Activated CD4-positive, alpha-beta memory T cell treated with anti-CD3 and anti-CD28 coated beads for 36 hours (primary cell): ENCODE measurements at regions of chr22 and their contacts with region 1.

Region 1: GRCh38 chr22:26589845-26590736 is at the start of gene TPST2:
- DNase-seq: peak; percentile 84
- H3K4me3 Mint-ChIP-seq: peak within 1 kb of the TSS; percentile 86
- H3K27ac Mint-ChIP-seq: peak within 1 kb of the TSS; percentile 88
- H3K4me1 Mint-ChIP-seq: peaks cover 55% of the 10 kb centered on the region
- H3K27me3 Mint-ChIP-seq: no peaks in the 10 kb centered on the region
- total RNA-seq, gene TPST2: 27.9 to 31.2 TPM

Region 2: GRCh38 chr22:26502688-26503561 is 87.2 kb before region 1 on chr22:
- CTCF ChIA-PET with region 1: no interaction called
- POLR2A ChIA-PET with region 1: interaction called, 3 read pairs
- intact Hi-C with region 1: loop called (anchors 5 kb)
- DNase-seq: peak; percentile 75
- H3K4me3 Mint-ChIP-seq: no peak overlapping the region
- H3K27ac Mint-ChIP-seq: peak overlapping the region; percentile 87
- H3K4me1 Mint-ChIP-seq: peaks cover 20% of the 10 kb centered on the region
- H3K27me3 Mint-ChIP-seq: no peaks in the 10 kb centered on the region

Region 3: GRCh38 chr22:26574001-26574725 is 15.9 kb before region 1 on chr22:
- CTCF ChIA-PET with region 1: no interaction called
- POLR2A ChIA-PET with region 1: no interaction called
- intact Hi-C with region 1: no loop called
- DNase-seq: no peak
- H3K4me3 Mint-ChIP-seq: no peak overlapping the region
- H3K27ac Mint-ChIP-seq: no peak overlapping the region
- H3K4me1 Mint-ChIP-seq: peaks cover 25% of the 10 kb centered on the region
- H3K27me3 Mint-ChIP-seq: no peaks in the 10 kb centered on the region

Region 4: GRCh38 chr22:26610072-26610958 is 20.2 kb after region 1 on chr22:
- CTCF ChIA-PET with region 1: no interaction called
- POLR2A ChIA-PET with region 1: interaction called, 3 read pairs
- intact Hi-C with region 1: loop called (anchors 1 kb)
- DNase-seq: peak; percentile 80
- H3K4me3 Mint-ChIP-seq: no peak overlapping the region
- H3K27ac Mint-ChIP-seq: peak overlapping the region; percentile 50
- H3K4me1 Mint-ChIP-seq: peaks cover 21% of the 10 kb centered on the region
- H3K27me3 Mint-ChIP-seq: no peaks in the 10 kb centered on the region

Region 5: DNA sequence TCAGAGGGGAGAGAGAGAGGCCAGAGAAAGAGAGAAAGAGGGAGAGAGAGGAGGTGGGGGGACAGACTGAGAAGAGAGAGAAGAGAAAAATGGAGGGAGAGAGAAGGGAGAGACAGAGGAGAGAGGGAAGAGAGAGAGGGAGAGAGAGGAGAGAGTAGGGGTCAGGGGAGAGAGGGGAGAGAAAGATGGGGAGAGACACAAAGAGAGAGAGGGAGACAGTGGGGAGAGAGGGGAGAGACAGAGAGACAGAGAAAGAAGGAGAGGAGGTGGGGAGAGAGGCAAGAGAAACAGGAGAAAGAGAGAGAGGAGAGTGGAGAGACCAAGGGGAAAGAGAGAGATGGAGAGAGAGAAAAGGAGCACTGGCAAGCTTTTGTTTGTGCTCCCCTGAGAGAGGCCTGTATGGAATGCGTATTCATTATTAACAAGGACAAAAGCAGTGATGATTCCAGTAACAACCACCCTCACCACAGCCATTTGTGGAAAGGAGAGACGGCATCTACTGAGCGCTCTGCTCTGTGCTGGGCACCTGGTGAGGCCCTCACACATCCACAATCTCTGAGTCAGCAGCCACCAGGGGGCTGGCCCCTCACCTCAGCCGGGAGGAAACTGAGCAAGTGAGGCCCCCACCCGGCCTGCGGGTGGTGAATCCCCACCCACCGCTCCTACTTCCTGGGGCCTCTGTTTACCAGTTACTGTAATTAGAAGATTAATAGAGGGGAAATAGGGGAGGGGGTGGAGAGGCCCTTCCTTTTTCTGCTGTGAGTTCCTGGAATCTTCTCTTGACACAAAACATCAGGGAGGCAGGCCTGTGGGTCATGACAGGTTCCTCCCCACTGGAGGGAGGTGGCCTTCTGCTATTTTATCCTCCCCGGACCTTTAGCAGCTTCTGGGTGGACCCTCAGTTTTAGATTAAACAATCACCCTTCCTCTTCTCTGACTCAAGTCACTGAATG is 52.6 kb after region 1 on chr22:
- CTCF ChIA-PET with region 1: no interaction called
- POLR2A ChIA-PET with region 1: no interaction called
- intact Hi-C with region 1: loop called (anchors 1 kb)
- DNase-seq: peak; percentile 94
- H3K4me3 Mint-ChIP-seq: peak overlapping the region; percentile 67
- H3K27ac Mint-ChIP-seq: peak overlapping the region; percentile 97
- H3K4me1 Mint-ChIP-seq: peaks cover 77% of the 10 kb centered on the region
- H3K27me3 Mint-ChIP-seq: no peaks in the 10 kb centered on the region